ENCODE measurements at regions of chr15 and their contacts with region 1.

Region 1: GRCh38 chr15:29352402-29352801 is 82.8 kb upstream of the NSMCE3 start:
- DNase-seq: no peak
- ATAC-seq: no peak
- H3K4me3 ChIP-seq: no peak overlapping the region
- H3K27ac ChIP-seq: no peak overlapping the region
- H3K4me1 ChIP-seq: no peaks in the 10 kb centered on the region
- H3K27me3 ChIP-seq: peaks cover 0 to 18% (median 0%) of the 10 kb centered on the region in 9 donors
- CTCF ChIP-seq: no peak
- POLR2A ChIP-seq: no peak

Region 2: GRCh38 chr15:29149738-29150075 is 202.7 kb before region 1 on chr15:
- intact Hi-C with region 1: no loop called
- DNase-seq: no peak
- ATAC-seq: no peak
- H3K4me3 ChIP-seq: no peak overlapping the region
- H3K27ac ChIP-seq: no peak overlapping the region
- H3K4me1 ChIP-seq: no peaks in the 10 kb centered on the region
- H3K27me3 ChIP-seq: no peaks in the 10 kb centered on the region
- CTCF ChIP-seq: no peak
- POLR2A ChIP-seq: no peak

Region 3: GRCh38 chr15:29291067-29291845 is 61.1 kb before region 1 on chr15:
- intact Hi-C with region 1: loop called in 1 of 10 experiments (anchors 10 kb)
- DNase-seq: no peak
- ATAC-seq: no peak
- H3K4me3 ChIP-seq: no peak overlapping the region
- H3K27ac ChIP-seq: no peak overlapping the region
- H3K4me1 ChIP-seq: no peaks in the 10 kb centered on the region
- H3K27me3 ChIP-seq: peaks cover 0 to 16% (median 0%) of the 10 kb centered on the region in 9 donors
- CTCF ChIP-seq: no peak
- POLR2A ChIP-seq: no peak

Region 4: GRCh38 chr15:29337156-29337959 is 15.0 kb before region 1 on chr15:
- intact Hi-C with region 1: no loop called
- DNase-seq: no peak
- ATAC-seq: no peak
- H3K4me3 ChIP-seq: no peak overlapping the region
- H3K27ac ChIP-seq: no peak overlapping the region
- H3K4me1 ChIP-seq: no peaks in the 10 kb centered on the region
- H3K27me3 ChIP-seq: peaks cover 0 to 4% (median 0%) of the 10 kb centered on the region in 9 donors
- CTCF ChIP-seq: no peak
- POLR2A ChIP-seq: no peak

Measured in heart left ventricle (tissue), 16 donors.